ENCODE measurements at regions of chr6 and their contacts with region 1.

Region 1: GRCh38 chr6:125301435-125302391 is at the start of gene HDDC2:
- DNase-seq: peak; percentile 43 to 64
- ATAC-seq: peak; percentile 76 to 78
- H3K4me3 ChIP-seq: peak within 1 kb of the TSS; percentile 72 to 90 (median 78)
- H3K27ac ChIP-seq: peak within 1 kb of the TSS; percentile 84 to 96 (median 93)
- H3K4me1 ChIP-seq: peaks cover 21 to 33% of the 10 kb centered on the region in 2 donors
- H3K27me3 ChIP-seq: no peaks in the 10 kb centered on the region
- CTCF ChIP-seq: peak in 1 of 5 experiments; percentile 23
- POLR2A ChIP-seq: peak; percentile 44 to 58
- total RNA-seq, gene HDDC2: 54.9 to 88.3 (median 77.7) TPM

Region 2: GRCh38 chr6:124961777-124962611 is 339.7 kb before region 1 on chr6 and contains the start of gene RNF217:
- in situ Hi-C with region 1: no loop called
- intact Hi-C with region 1: loop called (anchors 10 kb)
- DNase-seq: peak; percentile 29 to 59
- ATAC-seq: peak; percentile 34 to 39
- H3K4me3 ChIP-seq: peak within 1 kb of the TSS; percentile 72 to 87 (median 81)
- H3K27ac ChIP-seq: peak within 1 kb of the TSS; percentile 83 to 92 (median 90)
- H3K4me1 ChIP-seq: peaks cover 34 to 43% of the 10 kb centered on the region in 2 donors
- H3K27me3 ChIP-seq: no peaks in the 10 kb centered on the region
- CTCF ChIP-seq: peak in 1 of 5 experiments; percentile 10
- POLR2A ChIP-seq: peak; percentile 50 to 54
- total RNA-seq, gene RNF217: 4.5 to 15.5 (median 12.4) TPM

Region 3: DNA sequence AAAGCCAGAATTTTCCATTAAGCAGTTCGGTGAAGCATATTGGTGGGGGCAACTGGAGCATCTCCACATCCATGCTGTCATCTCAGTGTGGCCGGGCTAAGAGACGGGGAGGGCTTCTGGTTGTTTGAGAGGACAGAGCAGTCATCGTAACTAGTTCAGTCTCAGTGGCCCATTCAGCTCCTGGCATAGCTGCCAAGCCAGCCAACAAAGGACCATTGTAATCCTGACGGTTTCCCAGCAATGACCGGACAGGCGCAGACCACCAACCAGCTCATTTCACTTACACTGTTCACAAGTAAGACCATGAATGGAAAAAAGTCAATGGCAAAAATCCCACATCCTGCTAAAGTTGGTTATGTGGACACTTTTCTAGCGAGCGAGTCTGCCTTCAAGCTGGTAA is 14.9 kb after region 1 on chr6:
- in situ Hi-C with region 1: no loop called
- intact Hi-C with region 1: no loop called
- DNase-seq: no peak
- ATAC-seq: no peak
- H3K4me3 ChIP-seq: no peak overlapping the region
- H3K27ac ChIP-seq: no peak overlapping the region
- H3K4me1 ChIP-seq: no peaks in the 10 kb centered on the region
- H3K27me3 ChIP-seq: no peaks in the 10 kb centered on the region
- CTCF ChIP-seq: no peak
- POLR2A ChIP-seq: no peak

Region 4: GRCh38 chr6:125658759-125659431 is 357.2 kb after region 1 on chr6:
- in situ Hi-C with region 1: no loop called
- intact Hi-C with region 1: no loop called
- DNase-seq: no peak
- ATAC-seq: no peak
- H3K4me3 ChIP-seq: no peak overlapping the region
- H3K27ac ChIP-seq: no peak overlapping the region
- H3K4me1 ChIP-seq: no peaks in the 10 kb centered on the region
- H3K27me3 ChIP-seq: no peaks in the 10 kb centered on the region
- CTCF ChIP-seq: no peak
- POLR2A ChIP-seq: no peak

Measured in gastrocnemius medialis (tissue), 4 donors.